Common myeloid progenitor, CD34-positive (primary cell): ENCODE measurements at regions of chr15 and their contacts with region 1.

Region 1: DNA sequence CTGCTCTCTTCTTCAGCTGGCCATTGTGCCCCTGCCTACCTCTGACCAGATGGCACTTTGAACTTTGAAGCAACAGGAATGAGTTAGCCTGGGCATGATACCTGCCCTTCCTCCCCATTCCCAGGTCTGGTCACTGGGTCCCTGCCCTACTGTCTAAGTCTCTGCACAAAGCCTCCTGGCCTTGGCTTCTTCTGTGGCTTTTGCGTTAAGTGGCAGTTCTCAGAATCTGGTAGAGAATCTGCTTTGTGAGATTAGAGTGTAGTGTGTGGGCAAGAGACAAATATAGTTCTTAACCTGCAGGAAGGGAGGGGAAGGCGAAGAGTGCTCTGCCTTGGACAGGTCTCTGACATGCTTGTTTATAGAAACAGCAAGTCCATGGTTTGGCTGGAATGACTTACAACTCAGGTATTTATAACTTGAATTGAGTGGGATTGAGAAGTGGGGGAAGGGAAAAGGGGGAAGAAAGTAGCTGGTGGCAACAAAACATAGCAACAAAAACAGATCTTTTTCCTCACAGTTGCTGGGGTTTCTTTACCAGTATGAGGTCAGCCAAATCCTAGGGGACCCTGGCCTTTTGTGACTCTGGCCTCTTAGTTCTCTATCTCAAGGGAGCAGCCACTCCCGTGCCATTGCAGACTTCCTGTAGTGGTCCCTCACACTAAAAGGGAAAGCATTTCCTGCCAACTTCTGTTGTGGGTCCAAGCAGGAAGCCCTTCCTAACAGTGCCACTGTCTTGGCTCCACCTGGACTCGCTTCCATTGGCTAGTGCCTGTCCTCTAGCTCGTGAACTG is 16.7 kb downstream of the MAPKBP1 start:
- DNase-seq: peak in 2 of 3 donors; percentile 78 to 86
- H3K4me3 ChIP-seq: peak overlapping the region in 4 of 7 experiments; percentile 12 to 55 (median 36)
- H3K27ac ChIP-seq: peak overlapping the region; percentile 67 to 83
- H3K4me1 ChIP-seq: peaks cover 17 to 65% (median 56%) of the 10 kb centered on the region in 4 experiments
- H3K27me3 ChIP-seq: no peaks in the 10 kb centered on the region

Region 2: DNA sequence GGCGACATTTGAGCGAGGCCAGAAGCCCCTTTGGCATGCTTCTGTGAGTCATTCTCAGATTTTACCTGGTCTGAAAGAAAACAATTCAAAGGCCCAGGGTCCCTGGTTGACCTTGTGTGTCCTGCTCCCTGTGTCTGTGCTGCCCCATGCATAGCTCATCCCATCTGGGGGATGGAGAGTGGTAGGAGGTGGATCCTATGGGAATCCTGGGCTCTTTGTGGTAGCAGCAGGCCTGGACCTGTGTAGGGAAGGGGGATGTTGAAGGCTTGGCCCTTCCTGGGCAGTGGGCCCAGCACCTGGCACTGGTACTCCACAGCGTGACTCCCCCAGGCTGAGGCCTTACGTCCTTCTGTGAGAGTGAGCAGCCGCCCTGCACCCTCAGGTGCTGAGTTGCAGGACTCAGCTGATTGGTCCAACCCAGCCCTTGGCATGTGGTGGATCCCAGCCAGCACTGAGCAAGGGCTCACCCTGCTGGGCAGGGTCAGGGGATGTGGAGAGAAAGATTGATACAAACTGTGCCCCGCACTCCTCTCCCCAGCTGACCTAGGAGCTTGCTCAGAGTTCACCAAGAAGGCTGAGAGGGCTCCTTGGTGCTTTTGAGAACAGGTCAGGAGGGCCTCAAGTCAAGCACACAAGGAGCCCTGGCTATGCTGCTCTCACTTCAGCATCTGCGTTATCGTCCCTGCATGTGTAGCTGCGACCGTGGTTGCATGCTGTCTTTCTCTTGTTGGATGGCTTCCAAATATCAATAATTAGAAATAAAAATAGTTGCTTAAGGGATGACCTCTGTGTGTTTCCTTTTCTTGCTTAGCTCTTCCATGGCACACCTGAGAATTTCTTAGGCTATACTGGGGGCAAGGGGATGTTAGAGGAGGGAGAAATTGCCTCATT is 15.6 kb after region 1 on chr15:
- CTCF ChIA-PET with region 1: interaction called, 46 read pairs
- POLR2A ChIA-PET with region 1: interaction called, 6 read pairs
- DNase-seq: peak in 1 of 3 donors; percentile 26
- H3K4me3 ChIP-seq: no peak overlapping the region
- H3K27ac ChIP-seq: peak overlapping the region in 1 of 2 experiments; percentile 90
- H3K4me1 ChIP-seq: peaks cover 0 to 54% (median 44%) of the 10 kb centered on the region in 4 experiments
- H3K27me3 ChIP-seq: no peaks in the 10 kb centered on the region

Region 3: DNA sequence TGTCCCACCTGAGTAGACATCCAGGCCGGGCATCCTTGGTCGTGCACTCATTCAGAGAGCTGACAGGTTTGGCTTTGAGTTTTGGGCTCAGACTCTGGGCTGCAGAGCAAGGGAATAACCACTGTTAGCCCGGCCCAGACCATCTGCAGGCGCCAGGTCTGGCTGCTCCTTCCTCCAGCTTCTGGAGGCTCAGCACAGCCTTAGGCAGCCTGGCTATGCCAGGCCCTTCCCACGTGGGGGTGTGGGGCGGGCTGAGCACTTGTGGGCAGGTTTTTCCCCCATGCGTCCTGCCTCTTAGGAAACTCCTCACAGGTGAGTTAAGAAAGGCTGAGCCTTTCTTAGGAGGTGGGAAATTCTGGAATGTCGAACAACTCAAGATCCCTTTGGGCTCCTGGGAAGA is 58.9 kb after region 1 on chr15:
- CTCF ChIA-PET with region 1: no interaction called
- POLR2A ChIA-PET with region 1: no interaction called
- DNase-seq: no peak
- H3K4me3 ChIP-seq: no peak overlapping the region
- H3K27ac ChIP-seq: no peak overlapping the region
- H3K4me1 ChIP-seq: no peaks in the 10 kb centered on the region
- H3K27me3 ChIP-seq: peaks cover 0 to 9% (median 0%) of the 10 kb centered on the region in 5 experiments